Activated CD4-positive, alpha-beta memory T cell treated with anti-CD3 and anti-CD28 coated beads, Interleukin-2, amount 10 ng/mL, durations not matched to agents 7 days and 5 days (primary cell): ENCODE measurements at regions of chr15 and their contacts with region 1.

Region 1: GRCh38 chr15:63048115-63048775 is 5.7 kb downstream of the TPM1 start:
- DNase-seq: peak; percentile 83
- H3K4me3 Mint-ChIP-seq: peak overlapping the region; percentile 80
- H3K27ac Mint-ChIP-seq: no peak overlapping the region
- H3K4me1 Mint-ChIP-seq: peaks cover 16% of the 10 kb centered on the region
- H3K27me3 Mint-ChIP-seq: peaks cover 44% of the 10 kb centered on the region

Region 2: DNA sequence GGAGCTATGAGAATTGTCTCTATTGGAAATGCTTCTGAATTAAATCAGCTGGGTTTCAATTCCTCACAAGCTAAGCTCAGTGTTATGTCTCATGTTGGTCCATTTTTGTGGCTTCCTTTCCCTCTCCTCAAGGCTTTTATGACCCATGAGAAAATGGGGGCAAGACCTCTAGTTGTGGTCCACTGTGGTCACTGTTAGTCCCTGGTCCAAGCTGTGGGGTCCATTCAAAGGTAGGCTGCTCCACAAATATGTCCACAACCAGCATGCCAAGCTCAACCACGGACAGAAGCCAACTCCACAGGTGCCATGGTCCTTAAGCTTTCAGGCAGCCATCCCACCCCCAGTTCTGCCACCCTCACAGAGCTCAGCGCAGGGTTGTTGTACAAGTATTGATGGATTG is 20.6 kb before region 1 on chr15:
- CTCF ChIA-PET with region 1: interaction called, 10 read pairs
- POLR2A ChIA-PET with region 1: no interaction called
- DNase-seq: no peak
- H3K4me3 Mint-ChIP-seq: no peak overlapping the region
- H3K27ac Mint-ChIP-seq: no peak overlapping the region
- H3K4me1 Mint-ChIP-seq: no peaks in the 10 kb centered on the region
- H3K27me3 Mint-ChIP-seq: peaks cover 15% of the 10 kb centered on the region

Region 3: DNA sequence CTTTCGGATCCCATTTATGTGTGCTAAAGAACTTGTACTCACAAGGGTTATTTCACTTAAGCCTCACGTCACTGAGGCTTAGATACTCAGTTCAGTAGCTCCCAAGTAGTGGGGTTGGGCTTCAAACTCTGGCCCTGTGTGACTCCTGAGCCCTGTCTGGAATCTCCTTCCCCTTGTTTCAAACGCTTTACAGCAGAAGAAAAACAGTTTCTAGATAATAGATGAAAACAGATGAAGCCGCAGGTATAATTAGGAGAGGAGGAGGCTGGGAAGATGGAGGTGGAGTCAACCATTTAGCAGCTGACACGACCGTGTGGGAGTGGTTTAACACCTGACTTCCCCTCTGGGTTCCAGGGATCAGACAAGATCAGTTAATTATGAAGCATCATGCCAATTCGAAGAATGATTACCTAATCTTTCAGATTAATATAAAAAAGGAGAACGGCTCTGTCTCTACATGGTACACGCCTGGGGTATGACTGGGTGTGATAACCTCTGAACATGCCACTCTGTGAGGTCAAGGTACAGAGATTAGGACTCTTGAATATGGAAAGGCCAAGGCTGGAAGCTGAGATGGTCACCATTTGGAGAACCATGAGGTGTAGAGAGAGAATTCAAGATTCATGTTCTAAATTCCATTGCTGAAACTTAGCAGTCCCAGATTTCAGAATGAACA is 25.4 kb after region 1 on chr15:
- CTCF ChIA-PET with region 1: interaction called, 10 read pairs
- POLR2A ChIA-PET with region 1: no interaction called
- DNase-seq: no peak
- H3K4me3 Mint-ChIP-seq: no peak overlapping the region
- H3K27ac Mint-ChIP-seq: no peak overlapping the region
- H3K4me1 Mint-ChIP-seq: peaks cover 22% of the 10 kb centered on the region
- H3K27me3 Mint-ChIP-seq: peaks cover 6% of the 10 kb centered on the region

Region 4: GRCh38 chr15:63157118-63157843 is 109.0 kb after region 1 on chr15 and contains the start of gene RPS27L:
- CTCF ChIA-PET with region 1: interaction called, 14 read pairs
- POLR2A ChIA-PET with region 1: interaction called, 3 read pairs
- DNase-seq: peak; percentile 91
- H3K4me3 Mint-ChIP-seq: peak within 1 kb of the TSS; percentile 99
- H3K27ac Mint-ChIP-seq: peak within 1 kb of the TSS; percentile 98
- H3K4me1 Mint-ChIP-seq: peaks cover 25% of the 10 kb centered on the region
- H3K27me3 Mint-ChIP-seq: no peaks in the 10 kb centered on the region
- total RNA-seq, gene RPS27L: 171 to 173 TPM

Region 5: GRCh38 chr15:63402498-63403253 is 354.4 kb after region 1 on chr15:
- CTCF ChIA-PET with region 1: interaction called, 24 read pairs
- POLR2A ChIA-PET with region 1: no interaction called
- DNase-seq: no peak
- H3K4me3 Mint-ChIP-seq: no peak overlapping the region
- H3K27ac Mint-ChIP-seq: no peak overlapping the region
- H3K4me1 Mint-ChIP-seq: peaks cover 17% of the 10 kb centered on the region
- H3K27me3 Mint-ChIP-seq: peaks cover 2% of the 10 kb centered on the region

Region 6: DNA sequence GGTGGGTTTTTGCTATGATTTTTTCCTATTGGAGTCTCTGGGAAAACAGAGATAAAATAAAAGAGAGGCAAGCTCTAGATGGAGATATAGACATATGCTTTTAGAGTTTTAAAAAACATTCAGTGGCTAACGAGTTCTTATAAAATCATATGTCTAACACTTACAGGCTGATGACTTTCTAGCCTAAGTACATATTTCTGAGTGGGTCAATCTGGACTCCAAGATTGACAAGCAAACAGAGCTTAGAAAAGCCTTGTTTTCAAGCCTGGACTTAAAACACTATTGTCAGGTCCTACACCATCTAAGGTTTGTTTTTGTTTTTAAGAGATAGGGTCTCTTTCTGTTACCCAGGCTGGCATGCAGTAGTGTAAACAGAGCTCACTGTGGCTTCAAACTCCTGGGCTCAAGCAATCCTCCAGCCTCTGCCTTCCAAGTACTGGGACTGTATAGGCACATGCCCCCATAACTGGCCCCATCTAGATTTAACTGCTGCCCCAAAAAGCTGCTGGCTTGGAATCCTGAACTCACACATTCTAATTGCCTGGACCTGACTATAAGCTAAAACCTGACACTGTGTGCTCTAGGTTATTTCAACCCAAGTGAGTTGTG is 635.2 kb after region 1 on chr15:
- CTCF ChIA-PET with region 1: no interaction called
- POLR2A ChIA-PET with region 1: no interaction called
- DNase-seq: no peak
- H3K4me3 Mint-ChIP-seq: no peak overlapping the region
- H3K27ac Mint-ChIP-seq: no peak overlapping the region
- H3K4me1 Mint-ChIP-seq: no peaks in the 10 kb centered on the region
- H3K27me3 Mint-ChIP-seq: no peaks in the 10 kb centered on the region